ENCODE measurements at regions of chr3 and their contacts with region 1.

Region 1: GRCh38 chr3:150603153-150603979 is at the start of gene SELENOT:
- DNase-seq: peak; percentile 83 to 98 (median 87)

Region 2: GRCh38 chr3:150546226-150547044 is 56.9 kb before region 1 on chr3 and contains the starts of genes EIF2A and SERP1:
- intact Hi-C with region 1: loop called (anchors 1 kb)
- DNase-seq: peak; percentile 98 to 100 (median 99)

Region 3: DNA sequence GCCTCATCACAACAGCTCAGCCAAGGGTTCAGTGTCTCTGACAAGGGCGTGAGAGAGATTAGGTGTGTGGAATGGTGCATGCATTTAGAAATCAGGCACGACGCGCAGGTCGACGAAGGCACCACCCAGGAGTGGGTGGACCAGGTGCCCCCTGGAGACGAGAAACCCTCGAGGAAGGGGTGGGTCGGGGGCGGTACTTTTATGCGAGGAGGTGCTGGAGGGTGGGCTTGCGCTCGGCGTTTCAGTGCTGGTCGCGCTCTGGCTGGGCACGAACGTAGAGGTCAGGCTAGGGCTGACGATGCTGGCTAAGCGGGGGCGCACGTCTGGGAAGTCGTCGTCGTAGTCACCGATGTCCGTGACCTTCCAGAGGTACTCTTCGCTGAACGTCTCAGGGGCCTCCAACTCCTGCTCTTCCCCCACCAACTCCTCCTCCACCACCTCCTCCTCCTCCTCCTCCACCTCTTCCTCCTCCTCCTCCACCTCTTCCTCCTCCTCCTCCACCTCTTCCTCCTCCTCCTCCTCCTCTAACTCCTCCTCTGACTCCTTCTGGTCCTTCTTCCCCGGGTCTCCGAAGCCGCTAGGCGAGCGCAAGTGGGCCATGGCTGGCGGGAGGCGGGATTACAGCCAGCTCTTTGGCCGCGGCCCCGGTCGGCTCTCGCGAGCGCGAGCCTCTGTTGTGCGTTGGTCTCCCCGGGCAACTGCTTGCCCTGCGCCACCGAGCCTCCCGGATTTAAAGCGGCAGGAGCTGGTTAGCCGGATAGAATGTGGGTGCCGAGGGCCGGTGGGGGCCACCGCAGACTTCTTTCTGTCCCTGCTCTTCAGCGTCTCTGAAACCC is 100.2 kb after region 1 on chr3 and contains the start of gene ERICH6:
- intact Hi-C with region 1: loop called (anchors 5 kb)
- DNase-seq: peak; percentile 77 to 98 (median 90)

Region 4: GRCh38 chr3:150763122-150763841 is 159.9 kb after region 1 on chr3 and contains the start of gene SIAH2:
- intact Hi-C with region 1: loop called (anchors 5 kb)
- DNase-seq: peak; percentile 83 to 99 (median 89)

Measured in posterior cingulate gyrus (tissue), 11 donors.